PC-3 (cell line): ENCODE measurements at regions of chr6 and their contacts with region 1.

Region 1: GRCh38 chr6:95203153-95203754 is 374.1 kb upstream of the MANEA start:
- DNase-seq: peak; percentile 47
- ATAC-seq: peak; percentile 67
- H3K4me3 ChIP-seq: no peak overlapping the region
- H3K27ac ChIP-seq: no peak overlapping the region
- H3K4me1 ChIP-seq: no peaks in the 10 kb centered on the region
- H3K27me3 ChIP-seq: no peaks in the 10 kb centered on the region
- CTCF ChIP-seq: peak; percentile 64

Region 2: GRCh38 chr6:95280690-95281273 is 77.5 kb after region 1 on chr6:
- CTCF ChIA-PET with region 1: no interaction called
- POLR2A ChIA-PET with region 1: no interaction called
- intact Hi-C with region 1: loop called (anchors 2 kb)
- DNase-seq: peak; percentile 7
- ATAC-seq: 0 out of 2 replicates have a peak, but pooled peaks have one; percentile 40
- H3K4me3 ChIP-seq: no peak overlapping the region
- H3K27ac ChIP-seq: no peak overlapping the region
- H3K4me1 ChIP-seq: no peaks in the 10 kb centered on the region
- H3K27me3 ChIP-seq: no peaks in the 10 kb centered on the region
- CTCF ChIP-seq: peak; percentile 32; the same call in 1 of the 2 replicates

Region 3: DNA sequence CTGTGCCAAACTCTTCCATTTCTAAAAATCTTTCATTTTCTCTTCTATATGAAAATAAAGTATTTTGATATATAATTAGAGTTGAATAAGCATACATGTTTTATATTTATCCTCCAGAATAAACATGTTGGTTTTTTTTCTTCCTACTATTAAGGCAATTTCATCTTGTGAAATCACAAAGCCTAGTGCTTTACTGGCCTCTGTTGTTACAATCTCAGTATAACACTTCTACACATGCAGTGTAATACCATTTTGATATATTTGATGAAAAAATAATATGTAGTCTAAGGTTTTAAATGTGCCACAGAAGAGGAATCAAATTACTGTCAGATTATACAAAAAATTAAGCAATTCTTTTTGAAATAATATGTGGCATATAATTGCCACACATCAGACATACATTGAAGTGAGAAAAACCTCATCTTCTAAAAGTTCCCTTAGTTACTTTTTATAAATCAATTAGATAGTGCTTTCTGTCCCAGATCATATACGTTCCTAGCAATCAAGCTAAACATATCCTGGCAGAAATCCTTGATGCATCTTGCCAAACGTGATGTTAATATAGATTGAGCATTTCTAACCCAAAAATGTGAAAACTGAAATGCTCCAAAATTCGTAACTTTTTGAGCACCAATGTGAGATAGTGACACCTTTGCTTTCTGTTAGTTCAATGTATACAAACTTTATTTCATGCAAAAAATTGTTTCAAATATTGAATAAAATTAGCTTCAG is 149.0 kb after region 1 on chr6:
- CTCF ChIA-PET with region 1: no interaction called
- POLR2A ChIA-PET with region 1: no interaction called
- intact Hi-C with region 1: loop called (anchors 1 kb)
- DNase-seq: peak; percentile 4
- ATAC-seq: no peak
- H3K4me3 ChIP-seq: no peak overlapping the region
- H3K27ac ChIP-seq: no peak overlapping the region
- H3K4me1 ChIP-seq: no peaks in the 10 kb centered on the region
- H3K27me3 ChIP-seq: no peaks in the 10 kb centered on the region
- CTCF ChIP-seq: 0 out of 2 replicates have a peak, but pooled peaks have one; percentile 26